CD4-positive, alpha-beta T cell (primary cell): ENCODE measurements at regions of chr22 and their contacts with region 1.

Region 1: DNA sequence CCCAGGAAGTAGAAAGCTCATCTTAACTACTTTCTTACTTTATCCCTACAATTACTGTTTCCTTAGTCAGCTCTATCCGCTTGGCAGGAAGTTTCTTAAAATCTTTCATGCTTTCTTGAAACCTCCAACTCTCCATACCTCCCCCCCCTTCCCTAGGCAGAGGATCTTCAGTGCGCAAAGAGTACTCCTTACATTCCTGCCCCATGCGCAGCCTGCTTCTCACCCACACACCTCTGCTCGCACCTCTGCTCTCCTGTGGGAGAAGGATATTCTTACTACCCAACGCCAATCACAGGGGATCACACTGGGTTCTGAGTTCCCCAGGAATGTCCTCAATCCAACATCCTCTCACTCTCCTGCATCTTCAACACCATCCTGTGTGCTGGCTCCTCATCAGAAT is 12.3 kb downstream of the TCF20 start:
- DNase-seq: no peak
- ATAC-seq: no peak
- H3K4me3 ChIP-seq: no peak overlapping the region
- H3K4me3 Mint-ChIP-seq: no peak overlapping the region
- H3K27ac ChIP-seq: no peak overlapping the region
- H3K27ac Mint-ChIP-seq: peak overlapping the region; percentile 16
- H3K4me1 ChIP-seq: peaks cover 50% of the 10 kb centered on the region
- H3K4me1 Mint-ChIP-seq: peaks cover 86% of the 10 kb centered on the region
- H3K27me3 ChIP-seq: no peaks in the 10 kb centered on the region
- H3K27me3 Mint-ChIP-seq: no peaks in the 10 kb centered on the region
- CTCF ChIP-seq: no peak

Region 2: GRCh38 chr22:42202669-42203068 is 55.5 kb before region 1 on chr22:
- CTCF ChIA-PET with region 1: no interaction called
- POLR2A ChIA-PET with region 1: interaction called, 3 read pairs
- intact Hi-C with region 1: loop called in 1 of 2 experiments (anchors 10 kb)
- DNase-seq: peak; percentile 25 to 66 (median 48)
- ATAC-seq: peak; percentile 71
- H3K4me3 ChIP-seq: peak overlapping the region; percentile 29
- H3K4me3 Mint-ChIP-seq: peak overlapping the region; percentile 68
- H3K27ac ChIP-seq: peak overlapping the region in 1 of 2 donors; percentile 45
- H3K27ac Mint-ChIP-seq: peak overlapping the region; percentile 65
- H3K4me1 ChIP-seq: peaks cover 55% of the 10 kb centered on the region
- H3K4me1 Mint-ChIP-seq: peaks cover 79% of the 10 kb centered on the region
- H3K27me3 ChIP-seq: no peaks in the 10 kb centered on the region
- H3K27me3 Mint-ChIP-seq: no peaks in the 10 kb centered on the region
- CTCF ChIP-seq: no peak

Region 3: GRCh38 chr22:42412744-42413333 is 154.7 kb after region 1 on chr22:
- CTCF ChIA-PET with region 1: no interaction called
- POLR2A ChIA-PET with region 1: no interaction called
- intact Hi-C with region 1: no loop called
- DNase-seq: no peak
- ATAC-seq: no peak
- H3K4me3 ChIP-seq: no peak overlapping the region
- H3K4me3 Mint-ChIP-seq: no peak overlapping the region
- H3K27ac ChIP-seq: no peak overlapping the region
- H3K27ac Mint-ChIP-seq: no peak overlapping the region
- H3K4me1 ChIP-seq: no peaks in the 10 kb centered on the region
- H3K4me1 Mint-ChIP-seq: no peaks in the 10 kb centered on the region
- H3K27me3 ChIP-seq: no peaks in the 10 kb centered on the region
- H3K27me3 Mint-ChIP-seq: no peaks in the 10 kb centered on the region
- CTCF ChIP-seq: no peak